Activated CD8-positive, alpha-beta T cell treated with anti-CD3 and anti-CD28 coated beads for 36 hours (primary cell): ENCODE measurements at regions of chr10 and their contacts with region 1.

Region 1: GRCh38 chr10:80046629-80047441 is 31.6 kb upstream of the TMEM254 start:
- DNase-seq: peak; percentile 83
- ATAC-seq: peak; percentile 89
- H3K4me3 Mint-ChIP-seq: no peak overlapping the region
- H3K27ac Mint-ChIP-seq: no peak overlapping the region
- H3K4me1 Mint-ChIP-seq: no peaks in the 10 kb centered on the region
- H3K27me3 Mint-ChIP-seq: no peaks in the 10 kb centered on the region
- CTCF ChIP-seq: peak; percentile 96

Region 2: GRCh38 chr10:79970062-79970461 is 76.8 kb before region 1 on chr10:
- CTCF ChIA-PET with region 1: no interaction called
- POLR2A ChIA-PET with region 1: no interaction called
- intact Hi-C with region 1: no loop called
- DNase-seq: no peak
- ATAC-seq: no peak
- H3K4me3 Mint-ChIP-seq: no peak overlapping the region
- H3K27ac Mint-ChIP-seq: no peak overlapping the region
- H3K4me1 Mint-ChIP-seq: no peaks in the 10 kb centered on the region
- H3K27me3 Mint-ChIP-seq: peaks cover 22% of the 10 kb centered on the region
- CTCF ChIP-seq: no peak

Region 3: DNA sequence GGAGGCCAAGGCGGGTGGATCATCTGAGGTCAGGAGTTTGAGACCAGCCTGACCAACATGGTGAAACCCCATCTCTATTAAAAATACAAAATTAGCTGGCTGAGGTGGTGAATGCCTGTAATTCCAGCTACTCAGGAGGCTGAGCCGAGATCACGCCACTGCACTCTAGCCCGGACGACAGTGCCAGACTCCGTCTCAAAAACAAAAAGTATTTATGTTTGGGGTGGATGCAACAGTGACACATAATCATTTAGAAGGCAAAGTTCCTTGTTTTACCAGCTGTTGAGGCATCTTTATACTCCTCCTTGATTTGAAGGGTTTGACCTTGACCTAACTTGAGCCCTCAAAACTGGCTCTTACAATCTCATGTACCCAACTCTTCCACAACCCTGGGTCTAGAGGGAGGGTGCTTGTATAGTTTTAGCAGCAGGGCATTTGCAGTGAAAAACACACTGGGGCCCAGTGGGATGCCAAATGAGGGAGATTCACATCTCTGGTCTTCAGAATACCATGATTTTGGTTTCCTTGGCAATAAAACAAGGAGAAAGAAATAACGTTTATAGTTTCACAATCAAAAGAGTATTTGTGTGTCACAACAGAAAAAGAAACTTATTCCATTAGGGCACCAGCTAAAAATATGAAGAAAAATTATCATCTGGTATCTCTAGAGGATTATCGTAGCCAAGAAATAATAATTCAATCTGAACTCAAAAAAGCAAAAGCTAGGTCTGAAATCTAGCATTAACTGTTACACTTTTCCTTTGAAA is 17.5 kb after region 1 on chr10:
- CTCF ChIA-PET with region 1: interaction called, 18 read pairs
- POLR2A ChIA-PET with region 1: no interaction called
- intact Hi-C with region 1: no loop called
- DNase-seq: no peak
- ATAC-seq: no peak
- H3K4me3 Mint-ChIP-seq: no peak overlapping the region
- H3K27ac Mint-ChIP-seq: no peak overlapping the region
- H3K4me1 Mint-ChIP-seq: no peaks in the 10 kb centered on the region
- H3K27me3 Mint-ChIP-seq: no peaks in the 10 kb centered on the region
- CTCF ChIP-seq: no peak

Region 4: GRCh38 chr10:80070057-80070456 is 23.2 kb after region 1 on chr10:
- CTCF ChIA-PET with region 1: interaction called, 18 read pairs
- POLR2A ChIA-PET with region 1: no interaction called
- intact Hi-C with region 1: no loop called
- DNase-seq: no peak
- ATAC-seq: no peak
- H3K4me3 Mint-ChIP-seq: no peak overlapping the region
- H3K27ac Mint-ChIP-seq: no peak overlapping the region
- H3K4me1 Mint-ChIP-seq: no peaks in the 10 kb centered on the region
- H3K27me3 Mint-ChIP-seq: no peaks in the 10 kb centered on the region
- CTCF ChIP-seq: no peak

Region 5: GRCh38 chr10:80168679-80169380 is 122.0 kb after region 1 on chr10:
- CTCF ChIA-PET with region 1: no interaction called
- POLR2A ChIA-PET with region 1: no interaction called
- intact Hi-C with region 1: no loop called
- DNase-seq: no peak
- ATAC-seq: no peak
- H3K4me3 Mint-ChIP-seq: no peak overlapping the region
- H3K27ac Mint-ChIP-seq: peak overlapping the region; percentile 7
- H3K4me1 Mint-ChIP-seq: peaks cover 17% of the 10 kb centered on the region
- H3K27me3 Mint-ChIP-seq: no peaks in the 10 kb centered on the region
- CTCF ChIP-seq: no peak